ENCODE measurements at regions of chr9 and their contacts with region 1.

Region 1: GRCh38 chr9:127651697-127652610 is 39.9 kb downstream of the STXBP1 start:
- DNase-seq: no peak
- H3K4me3 ChIP-seq: no peak overlapping the region
- H3K27ac ChIP-seq: no peak overlapping the region
- H3K4me1 ChIP-seq: peaks cover 3% of the 10 kb centered on the region
- H3K27me3 ChIP-seq: no peaks in the 10 kb centered on the region
- CTCF ChIP-seq: no peak

Region 2: DNA sequence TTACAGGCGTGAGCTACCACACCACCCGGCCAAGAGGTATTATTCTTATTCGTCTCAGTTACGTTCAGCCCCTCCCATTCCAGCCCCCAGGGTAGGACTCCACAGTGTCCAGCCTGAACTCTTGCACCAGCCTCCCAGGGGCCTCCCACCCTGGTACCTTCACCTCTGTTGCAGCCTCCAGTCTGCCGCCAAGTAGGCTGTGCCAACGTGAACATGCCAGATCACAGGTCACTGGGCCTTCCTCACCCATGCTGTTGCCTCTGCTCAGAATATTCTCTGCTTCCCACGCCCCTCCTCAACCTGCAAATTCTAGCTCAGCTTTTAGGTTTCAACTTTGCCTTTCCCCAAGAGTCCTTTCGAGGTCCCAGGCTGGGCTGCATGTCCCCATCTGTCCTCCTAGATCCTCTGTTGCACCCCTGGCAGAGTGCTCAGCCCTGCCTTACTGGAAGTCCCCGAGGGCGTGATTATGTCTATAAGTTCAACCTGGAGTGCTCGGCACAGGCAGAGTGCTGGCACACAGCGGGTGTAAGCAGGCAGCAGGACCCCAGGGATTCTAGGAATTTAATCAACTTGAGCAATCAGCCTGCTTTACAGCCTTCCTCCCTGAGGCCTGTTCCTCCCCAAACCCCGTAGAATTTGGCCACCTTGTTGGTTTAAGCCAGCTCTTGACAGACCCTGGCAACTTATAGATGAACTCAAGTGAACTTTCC is 53.0 kb before region 1 on chr9:
- CTCF ChIA-PET with region 1: no interaction called
- dilution Hi-C with region 1: loop called (anchors 5 kb)
- in situ Hi-C with region 1: no loop called
- intact Hi-C with region 1: no loop called
- DNase-seq: no peak
- H3K4me3 ChIP-seq: no peak overlapping the region
- H3K27ac ChIP-seq: no peak overlapping the region
- H3K4me1 ChIP-seq: no peaks in the 10 kb centered on the region
- H3K27me3 ChIP-seq: no peaks in the 10 kb centered on the region
- CTCF ChIP-seq: no peak

Region 3: DNA sequence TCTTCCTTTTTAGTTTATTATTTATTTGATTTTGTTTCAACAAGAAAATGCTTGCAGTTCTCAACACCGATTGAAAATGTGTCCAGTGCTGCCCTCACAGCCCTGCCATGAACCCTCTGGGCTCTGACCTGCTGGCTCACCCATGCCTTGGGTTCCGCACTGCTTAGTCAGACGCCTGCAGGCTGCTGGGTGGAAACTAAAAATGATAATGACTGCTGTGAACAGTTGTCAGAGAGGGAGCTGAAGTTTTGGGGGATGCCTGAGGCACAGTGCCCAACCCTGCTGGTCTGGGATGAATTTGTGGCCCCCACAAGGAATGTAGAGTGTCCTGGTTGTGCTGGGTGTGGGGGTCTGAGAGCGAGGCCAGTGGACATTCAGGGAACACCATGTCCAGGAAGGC is 32.6 kb after region 1 on chr9:
- CTCF ChIA-PET with region 1: no interaction called
- dilution Hi-C with region 1: loop called (anchors 5 kb)
- in situ Hi-C with region 1: no loop called
- intact Hi-C with region 1: loop called (anchors 1 kb)
- DNase-seq: peak; percentile 24
- H3K4me3 ChIP-seq: no peak overlapping the region
- H3K27ac ChIP-seq: no peak overlapping the region
- H3K4me1 ChIP-seq: peaks cover 24% of the 10 kb centered on the region
- H3K27me3 ChIP-seq: no peaks in the 10 kb centered on the region
- CTCF ChIP-seq: no peak

Measured in mammary epithelial cell (primary cell).